Heart left ventricle (tissue), 16 donors: ENCODE measurements at regions of chr4 and their contacts with region 1.

Region 1: GRCh38 chr4:41525129-41525528 is 12.8 kb upstream of the LIMCH1 start:
- DNase-seq: no peak
- ATAC-seq: peak; percentile 65 to 77 (median 70)
- H3K4me3 ChIP-seq: no peak overlapping the region
- H3K27ac ChIP-seq: peak overlapping the region in 7 of 12 donors; percentile 6 to 57 (median 44)
- H3K4me1 ChIP-seq: peaks cover 0 to 51% (median 23%) of the 10 kb centered on the region in 12 donors
- H3K27me3 ChIP-seq: no peaks in the 10 kb centered on the region
- CTCF ChIP-seq: no peak
- POLR2A ChIP-seq: no peak

Region 2: GRCh38 chr4:41442810-41443209 is 82.3 kb before region 1 on chr4:
- intact Hi-C with region 1: loop called in 2 of 10 experiments (anchors 5 to 10 kb)
- DNase-seq: no peak
- ATAC-seq: no peak
- H3K4me3 ChIP-seq: no peak overlapping the region
- H3K27ac ChIP-seq: no peak overlapping the region
- H3K4me1 ChIP-seq: peaks cover 0 to 71% (median 30%) of the 10 kb centered on the region in 12 donors
- H3K27me3 ChIP-seq: no peaks in the 10 kb centered on the region
- CTCF ChIP-seq: no peak
- POLR2A ChIP-seq: no peak

Region 3: GRCh38 chr4:41600243-41600912 is 75.2 kb after region 1 on chr4:
- intact Hi-C with region 1: loop called in 1 of 10 experiments (anchors 5 kb)
- DNase-seq: peak in 1 of 5 donors; percentile 45
- ATAC-seq: peak in 3 of 4 donors; percentile 56 to 77 (median 69)
- H3K4me3 ChIP-seq: no peak overlapping the region
- H3K27ac ChIP-seq: no peak overlapping the region
- H3K4me1 ChIP-seq: peaks cover 0 to 55% (median 27%) of the 10 kb centered on the region in 12 donors
- H3K27me3 ChIP-seq: no peaks in the 10 kb centered on the region
- CTCF ChIP-seq: no peak
- POLR2A ChIP-seq: no peak

Region 4: GRCh38 chr4:41644288-41644914 is 119.3 kb after region 1 on chr4:
- intact Hi-C with region 1: loop called in 3 of 10 experiments (anchors 10 kb)
- DNase-seq: peak; percentile 64 to 87 (median 77)
- ATAC-seq: peak; percentile 63 to 94 (median 92)
- H3K4me3 ChIP-seq: peak overlapping the region in 6 of 12 donors; percentile 7 to 31 (median 14)
- H3K27ac ChIP-seq: peak overlapping the region in 4 of 12 donors; percentile 27 to 55 (median 46)
- H3K4me1 ChIP-seq: peaks cover 0 to 36% (median 24%) of the 10 kb centered on the region in 12 donors
- H3K27me3 ChIP-seq: peaks cover 0 to 19% (median 0%) of the 10 kb centered on the region in 9 donors
- CTCF ChIP-seq: peak; percentile 76 to 96 (median 90)
- POLR2A ChIP-seq: no peak